Endothelial cell of umbilical vein (primary cell): ENCODE measurements at regions of chr6 and their contacts with region 1.

Region 1: GRCh38 chr6:165439928-165440554 is 130.6 kb upstream of the C6orf118 start:
- DNase-seq: peak; percentile 75
- H3K4me3 ChIP-seq: no peak overlapping the region
- H3K27ac ChIP-seq: no peak overlapping the region
- H3K4me1 ChIP-seq: no peaks in the 10 kb centered on the region
- H3K27me3 ChIP-seq: no peaks in the 10 kb centered on the region
- CTCF ChIP-seq: peak; percentile 35 to 38
- POLR2A ChIP-seq: no peak

Region 2: DNA sequence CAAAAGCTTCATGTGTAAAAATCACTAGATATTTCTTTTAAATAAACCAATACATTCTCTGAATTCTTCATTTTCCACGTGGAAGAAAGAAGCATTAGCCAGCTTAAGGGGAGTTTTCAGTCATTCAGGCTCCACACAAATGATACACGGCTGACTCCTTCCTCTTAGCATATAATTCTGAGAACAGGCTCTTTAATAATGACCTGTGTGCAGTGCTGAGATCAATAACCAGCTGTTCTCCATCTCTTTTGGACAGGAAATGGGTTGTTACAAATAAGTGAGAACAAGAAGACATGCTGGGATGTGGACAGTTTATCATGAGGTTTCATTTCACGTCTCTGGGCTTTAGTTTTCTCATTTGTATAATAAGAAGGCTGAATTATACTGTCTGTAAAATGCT is 16.2 kb after region 1 on chr6:
- CTCF ChIA-PET with region 1: interaction called, 48 read pairs
- POLR2A ChIA-PET with region 1: no interaction called
- dilution Hi-C with region 1: no loop called
- intact Hi-C with region 1: no loop called
- DNase-seq: no peak
- H3K4me3 ChIP-seq: no peak overlapping the region
- H3K27ac ChIP-seq: no peak overlapping the region
- H3K4me1 ChIP-seq: no peaks in the 10 kb centered on the region
- H3K27me3 ChIP-seq: no peaks in the 10 kb centered on the region
- CTCF ChIP-seq: no peak
- POLR2A ChIP-seq: no peak

Region 3: DNA sequence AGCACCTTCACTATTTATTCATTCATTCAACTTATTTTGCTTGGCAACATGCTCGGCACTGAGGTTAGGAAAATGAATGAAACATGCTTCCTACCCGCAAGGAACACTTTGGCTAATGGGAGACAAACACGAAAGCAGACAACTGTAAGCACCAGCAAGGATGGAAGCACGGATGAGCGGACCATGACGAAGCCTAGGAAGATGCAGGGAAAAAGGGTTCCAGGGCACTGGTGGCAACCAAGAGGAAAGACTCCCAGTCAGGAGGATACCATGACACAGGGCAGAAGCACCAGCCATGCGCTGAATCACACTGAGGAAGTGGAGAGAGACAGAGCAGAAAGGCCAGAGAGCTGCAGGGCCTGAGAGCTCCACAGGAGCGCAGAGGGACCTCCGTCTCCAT is 213.2 kb after region 1 on chr6:
- CTCF ChIA-PET with region 1: interaction called, 20 read pairs
- POLR2A ChIA-PET with region 1: no interaction called
- dilution Hi-C with region 1: no loop called
- intact Hi-C with region 1: no loop called
- DNase-seq: peak; percentile 61
- H3K4me3 ChIP-seq: no peak overlapping the region
- H3K27ac ChIP-seq: no peak overlapping the region
- H3K4me1 ChIP-seq: peaks cover 3% of the 10 kb centered on the region
- H3K27me3 ChIP-seq: peaks cover 0 to 2% of the 10 kb centered on the region in 2 experiments
- CTCF ChIP-seq: no peak
- POLR2A ChIP-seq: no peak

Region 4: GRCh38 chr6:165689699-165690098 is 249.7 kb after region 1 on chr6:
- CTCF ChIA-PET with region 1: interaction called, 10 read pairs
- POLR2A ChIA-PET with region 1: no interaction called
- dilution Hi-C with region 1: no loop called
- intact Hi-C with region 1: no loop called
- DNase-seq: no peak
- H3K4me3 ChIP-seq: no peak overlapping the region
- H3K27ac ChIP-seq: no peak overlapping the region
- H3K4me1 ChIP-seq: no peaks in the 10 kb centered on the region
- H3K27me3 ChIP-seq: peaks cover 0 to 2% of the 10 kb centered on the region in 2 experiments
- CTCF ChIP-seq: no peak
- POLR2A ChIP-seq: no peak

Region 5: DNA sequence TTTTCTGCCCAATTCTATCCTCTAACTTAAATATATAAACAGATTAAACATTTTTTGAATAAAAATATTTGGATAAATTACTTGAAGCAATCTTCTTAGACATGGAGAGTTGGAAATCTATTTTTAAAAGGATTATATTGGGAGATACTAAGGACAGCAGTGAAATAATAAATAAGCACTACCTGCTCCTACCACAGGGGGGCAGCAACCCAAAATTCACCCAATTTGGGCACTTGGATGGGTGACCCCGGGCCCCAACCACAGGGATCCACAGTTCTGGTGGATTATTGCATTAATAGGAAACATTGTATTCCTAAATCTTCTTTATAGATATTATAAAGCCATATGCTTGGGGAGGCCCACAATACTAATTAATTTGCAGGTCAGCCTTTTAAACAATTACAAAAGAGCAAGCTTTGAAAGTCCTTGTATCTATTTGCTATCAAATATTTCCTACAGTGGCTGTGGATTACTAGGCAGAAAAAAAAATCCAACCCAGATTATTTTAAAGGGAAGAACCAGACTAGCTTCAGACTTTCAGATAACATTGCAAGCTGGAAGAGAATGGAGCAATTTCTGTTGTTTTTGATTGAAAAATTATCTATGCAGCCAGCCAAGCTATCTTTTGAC is 289.4 kb after region 1 on chr6:
- CTCF ChIA-PET with region 1: interaction called, 95 read pairs
- POLR2A ChIA-PET with region 1: no interaction called
- dilution Hi-C with region 1: no loop called
- intact Hi-C with region 1: loop called (anchors 1 kb)
- DNase-seq: peak; percentile 40
- H3K4me3 ChIP-seq: no peak overlapping the region
- H3K27ac ChIP-seq: no peak overlapping the region
- H3K4me1 ChIP-seq: no peaks in the 10 kb centered on the region
- H3K27me3 ChIP-seq: peaks cover 4% of the 10 kb centered on the region in 2 experiments
- CTCF ChIP-seq: peak; percentile 60 to 70
- POLR2A ChIP-seq: no peak

Region 6: GRCh38 chr6:165850434-165851019 is 410.5 kb after region 1 on chr6:
- CTCF ChIA-PET with region 1: interaction called, 164 read pairs
- POLR2A ChIA-PET with region 1: no interaction called
- dilution Hi-C with region 1: no loop called
- intact Hi-C with region 1: loop called (anchors 1 kb)
- DNase-seq: peak; percentile 62
- H3K4me3 ChIP-seq: no peak overlapping the region
- H3K27ac ChIP-seq: no peak overlapping the region
- H3K4me1 ChIP-seq: no peaks in the 10 kb centered on the region
- H3K27me3 ChIP-seq: peaks cover 10 to 23% of the 10 kb centered on the region in 2 experiments
- CTCF ChIP-seq: peak; percentile 92 to 94
- POLR2A ChIP-seq: no peak